CD4-positive, alpha-beta T cell (primary cell): ENCODE measurements at regions of chr3 and their contacts with region 1.

Region 1: DNA sequence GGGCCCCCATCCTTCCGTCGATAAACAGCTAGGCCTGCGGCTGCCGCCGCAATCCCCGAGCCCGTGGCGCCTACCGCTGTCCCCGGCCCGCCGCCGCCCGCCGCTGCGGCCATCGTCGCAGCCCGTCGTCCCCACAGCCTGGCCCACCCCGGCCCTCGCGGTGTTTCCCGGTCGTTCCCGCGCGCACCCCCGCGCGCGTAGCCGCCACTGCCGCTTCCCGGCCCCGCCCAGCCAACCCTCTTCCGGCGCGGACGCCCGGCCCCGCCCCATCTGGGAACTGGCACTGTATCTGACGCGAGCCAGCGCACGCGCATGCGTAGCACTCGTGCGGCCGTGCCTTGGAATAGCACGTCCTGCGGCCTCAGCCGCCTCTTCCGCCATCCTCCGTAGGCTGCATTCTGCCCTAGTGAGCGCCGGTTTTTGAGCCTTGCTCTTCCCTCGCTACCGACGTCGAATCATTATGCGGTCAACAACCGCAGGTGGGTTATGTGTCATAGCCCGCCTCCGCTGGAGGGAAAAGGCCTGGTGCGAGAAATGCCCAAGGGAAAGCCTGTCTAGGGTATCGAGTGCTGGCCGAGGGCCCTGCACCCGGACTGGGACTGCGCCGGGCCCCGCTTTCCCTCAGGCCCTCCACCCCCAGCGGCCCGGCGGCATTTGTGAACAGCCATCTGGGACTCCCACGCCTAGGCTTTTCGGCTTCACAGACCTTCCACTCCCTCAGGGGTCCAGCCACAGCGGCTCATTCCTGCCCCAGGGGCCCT is at the start of gene SMARCC1:
- DNase-seq: peak; percentile 94 to 99 (median 97)
- ATAC-seq: peak; percentile 89
- H3K4me3 ChIP-seq: peak within 1 kb of the TSS; percentile 84
- H3K4me3 Mint-ChIP-seq: peak within 1 kb of the TSS; percentile 95
- H3K27ac ChIP-seq: peak within 1 kb of the TSS; percentile 96 to 97
- H3K27ac Mint-ChIP-seq: peak within 1 kb of the TSS; percentile 99
- H3K4me1 ChIP-seq: peaks cover 44% of the 10 kb centered on the region
- H3K4me1 Mint-ChIP-seq: peaks cover 31% of the 10 kb centered on the region
- H3K27me3 ChIP-seq: no peaks in the 10 kb centered on the region
- H3K27me3 Mint-ChIP-seq: no peaks in the 10 kb centered on the region
- CTCF ChIP-seq: no peak
- total RNA-seq, gene SMARCC1: 74.2 to 76.2 TPM

Region 2: GRCh38 chr3:47282424-47283192 is 499.3 kb before region 1 on chr3 and contains the starts of genes KIF9 and KLHL18:
- CTCF ChIA-PET with region 1: no interaction called
- POLR2A ChIA-PET with region 1: no interaction called
- intact Hi-C with region 1: loop called in 1 of 2 experiments (anchors 5 kb)
- DNase-seq: peak; percentile 92 to 99 (median 95)
- ATAC-seq: peak; percentile 83
- H3K4me3 ChIP-seq: peak within 1 kb of the TSS; percentile 78
- H3K4me3 Mint-ChIP-seq: peak within 1 kb of the TSS; percentile 98
- H3K27ac ChIP-seq: peak within 1 kb of the TSS; percentile 95 to 98
- H3K27ac Mint-ChIP-seq: peak within 1 kb of the TSS; percentile 99
- H3K4me1 ChIP-seq: peaks cover 45% of the 10 kb centered on the region
- H3K4me1 Mint-ChIP-seq: peaks cover 42% of the 10 kb centered on the region
- H3K27me3 ChIP-seq: no peaks in the 10 kb centered on the region
- H3K27me3 Mint-ChIP-seq: no peaks in the 10 kb centered on the region
- CTCF ChIP-seq: no peak
- total RNA-seq, gene KIF9: 8.0 to 9.2 TPM
- total RNA-seq, gene KLHL18: 43.3 to 43.7 TPM

Region 3: GRCh38 chr3:47475570-47476329 is 306.1 kb before region 1 on chr3 and contains the start of gene SCAP:
- CTCF ChIA-PET with region 1: no interaction called
- POLR2A ChIA-PET with region 1: interaction called, 4 read pairs
- intact Hi-C with region 1: loop called in 1 of 2 experiments (anchors 2 kb)
- DNase-seq: peak; percentile 93 to 98 (median 96)
- ATAC-seq: peak; percentile 92
- H3K4me3 ChIP-seq: peak within 1 kb of the TSS; percentile 68
- H3K4me3 Mint-ChIP-seq: peak within 1 kb of the TSS; percentile 99
- H3K27ac ChIP-seq: peak within 1 kb of the TSS; percentile 73 to 74
- H3K27ac Mint-ChIP-seq: peak within 1 kb of the TSS; percentile 89
- H3K4me1 ChIP-seq: peaks cover 28% of the 10 kb centered on the region
- H3K4me1 Mint-ChIP-seq: peaks cover 44% of the 10 kb centered on the region
- H3K27me3 ChIP-seq: no peaks in the 10 kb centered on the region
- H3K27me3 Mint-ChIP-seq: no peaks in the 10 kb centered on the region
- CTCF ChIP-seq: peak; percentile 90
- total RNA-seq, gene SCAP: 58.3 to 60.3 TPM

Region 4: GRCh38 chr3:47731061-47731460 is 50.8 kb before region 1 on chr3:
- CTCF ChIA-PET with region 1: no interaction called
- POLR2A ChIA-PET with region 1: no interaction called
- intact Hi-C with region 1: loop called in 1 of 2 experiments (anchors 10 kb)
- DNase-seq: no peak
- ATAC-seq: no peak
- H3K4me3 ChIP-seq: no peak overlapping the region
- H3K4me3 Mint-ChIP-seq: no peak overlapping the region
- H3K27ac ChIP-seq: no peak overlapping the region
- H3K27ac Mint-ChIP-seq: no peak overlapping the region
- H3K4me1 ChIP-seq: no peaks in the 10 kb centered on the region
- H3K4me1 Mint-ChIP-seq: no peaks in the 10 kb centered on the region
- H3K27me3 ChIP-seq: no peaks in the 10 kb centered on the region
- H3K27me3 Mint-ChIP-seq: no peaks in the 10 kb centered on the region
- CTCF ChIP-seq: no peak

Region 5: GRCh38 chr3:48556793-48557626 is 775.1 kb after region 1 on chr3 and contains the start of gene PFKFB4:
- CTCF ChIA-PET with region 1: no interaction called
- POLR2A ChIA-PET with region 1: no interaction called
- intact Hi-C with region 1: loop called in 1 of 2 experiments (anchors 5 kb)
- DNase-seq: peak; percentile 98 to 100 (median 99)
- ATAC-seq: peak; percentile 87
- H3K4me3 ChIP-seq: peak within 1 kb of the TSS; percentile 55
- H3K4me3 Mint-ChIP-seq: peak within 1 kb of the TSS; percentile 87
- H3K27ac ChIP-seq: no peak within 1 kb of the TSS
- H3K27ac Mint-ChIP-seq: peak within 1 kb of the TSS; percentile 43
- H3K4me1 ChIP-seq: peaks cover 34% of the 10 kb centered on the region
- H3K4me1 Mint-ChIP-seq: peaks cover 25% of the 10 kb centered on the region
- H3K27me3 ChIP-seq: no peaks in the 10 kb centered on the region
- H3K27me3 Mint-ChIP-seq: no peaks in the 10 kb centered on the region
- CTCF ChIP-seq: no peak
- total RNA-seq, gene PFKFB4: 0.98 to 2.5 TPM